Activated CD8-positive, alpha-beta T cell treated with anti-CD3 and anti-CD28 coated beads for 36 hours (primary cell): ENCODE measurements at regions of chr17 and their contacts with region 1.

Region 1: GRCh38 chr17:66906321-66907278 is 57.9 kb upstream of the CACNG4 start:
- DNase-seq: peak; percentile 84
- ATAC-seq: peak; percentile 86
- H3K4me3 Mint-ChIP-seq: no peak overlapping the region
- H3K27ac Mint-ChIP-seq: peak overlapping the region; percentile 9
- H3K4me1 Mint-ChIP-seq: peaks cover 6% of the 10 kb centered on the region
- H3K27me3 Mint-ChIP-seq: peaks cover 3% of the 10 kb centered on the region
- CTCF ChIP-seq: peak; percentile 94

Region 2: DNA sequence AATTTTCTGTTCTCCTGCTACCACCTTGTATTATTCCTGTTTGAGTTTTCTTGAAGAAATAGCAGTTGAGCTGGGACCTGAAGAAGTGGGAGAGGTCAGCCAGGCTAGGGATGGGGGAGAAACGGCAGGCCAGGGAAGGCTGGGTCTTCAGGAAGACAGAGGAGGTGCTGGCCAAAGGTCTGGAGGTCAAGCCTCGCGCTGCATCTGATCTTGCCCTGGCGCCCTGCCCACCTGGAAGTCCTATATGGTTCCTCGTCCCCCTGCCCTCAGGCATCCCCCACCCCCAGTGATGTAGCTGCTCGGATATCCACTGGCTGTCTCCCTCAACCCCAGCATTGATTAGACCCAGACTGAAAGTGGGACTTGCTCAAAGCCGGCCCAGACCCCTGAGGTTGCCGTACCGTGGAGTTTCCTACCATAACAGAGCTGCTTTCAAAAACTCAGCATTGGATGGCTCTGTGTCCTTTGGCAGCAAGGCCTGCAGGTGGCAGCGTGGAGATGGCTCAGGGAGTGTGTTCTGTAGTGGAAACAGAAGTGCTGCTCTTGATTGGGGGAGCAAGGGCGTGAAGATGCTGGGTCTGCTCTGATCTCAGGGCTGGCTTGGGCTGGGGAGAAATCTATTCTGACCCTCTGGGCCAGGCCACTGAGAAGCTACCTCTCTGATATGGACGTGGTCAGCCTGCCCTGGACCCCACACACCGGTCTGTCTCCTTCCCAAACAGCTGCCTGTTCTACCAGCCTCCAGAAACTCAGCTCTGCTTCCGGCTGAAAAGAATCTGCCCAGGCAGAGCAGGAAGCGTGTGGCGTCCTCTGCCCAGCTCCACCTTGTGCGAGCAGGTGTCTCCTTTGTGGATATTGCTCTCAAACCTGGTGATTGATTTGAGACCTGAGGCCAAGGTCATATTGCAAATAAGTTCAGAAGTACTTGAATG is 178.7 kb before region 1 on chr17:
- CTCF ChIA-PET with region 1: interaction called, 4 read pairs
- POLR2A ChIA-PET with region 1: no interaction called
- intact Hi-C with region 1: loop called (anchors 5 kb)
- DNase-seq: peak; percentile 66
- ATAC-seq: peak; percentile 83
- H3K4me3 Mint-ChIP-seq: no peak overlapping the region
- H3K27ac Mint-ChIP-seq: no peak overlapping the region
- H3K4me1 Mint-ChIP-seq: peaks cover 5% of the 10 kb centered on the region
- H3K27me3 Mint-ChIP-seq: no peaks in the 10 kb centered on the region
- CTCF ChIP-seq: peak; percentile 54

Region 3: GRCh38 chr17:66941856-66942653 is 35.5 kb after region 1 on chr17:
- CTCF ChIA-PET with region 1: no interaction called
- POLR2A ChIA-PET with region 1: no interaction called
- intact Hi-C with region 1: no loop called
- DNase-seq: no peak
- ATAC-seq: no peak
- H3K4me3 Mint-ChIP-seq: no peak overlapping the region
- H3K27ac Mint-ChIP-seq: no peak overlapping the region
- H3K4me1 Mint-ChIP-seq: no peaks in the 10 kb centered on the region
- H3K27me3 Mint-ChIP-seq: peaks cover 52% of the 10 kb centered on the region
- CTCF ChIP-seq: no peak

Region 4: GRCh38 chr17:66951935-66952662 is 45.5 kb after region 1 on chr17:
- CTCF ChIA-PET with region 1: no interaction called
- POLR2A ChIA-PET with region 1: no interaction called
- intact Hi-C with region 1: no loop called
- DNase-seq: no peak
- ATAC-seq: no peak
- H3K4me3 Mint-ChIP-seq: no peak overlapping the region
- H3K27ac Mint-ChIP-seq: no peak overlapping the region
- H3K4me1 Mint-ChIP-seq: no peaks in the 10 kb centered on the region
- H3K27me3 Mint-ChIP-seq: peaks cover 8% of the 10 kb centered on the region
- CTCF ChIP-seq: no peak